ENCODE measurements at regions of chr13 and their contacts with region 1.

Region 1: GRCh38 chr13:94595950-94596574 is at the start of gene TGDS:
- DNase-seq: peak; percentile 93
- H3K4me3 Mint-ChIP-seq: peak within 1 kb of the TSS; percentile 95
- H3K27ac Mint-ChIP-seq: peak within 1 kb of the TSS; percentile 92
- H3K4me1 Mint-ChIP-seq: peaks cover 45% of the 10 kb centered on the region
- H3K27me3 Mint-ChIP-seq: no peaks in the 10 kb centered on the region

Region 2: GRCh38 chr13:94435604-94436226 is 160.3 kb before region 1 on chr13:
- CTCF ChIA-PET with region 1: interaction called, 12 read pairs
- DNase-seq: no peak
- H3K4me3 Mint-ChIP-seq: no peak overlapping the region
- H3K27ac Mint-ChIP-seq: no peak overlapping the region
- H3K4me1 Mint-ChIP-seq: peaks cover 10% of the 10 kb centered on the region
- H3K27me3 Mint-ChIP-seq: no peaks in the 10 kb centered on the region

Region 3: GRCh38 chr13:94656766-94657165 is 60.7 kb after region 1 on chr13:
- CTCF ChIA-PET with region 1: no interaction called
- DNase-seq: no peak
- H3K4me3 Mint-ChIP-seq: no peak overlapping the region
- H3K27ac Mint-ChIP-seq: no peak overlapping the region
- H3K4me1 Mint-ChIP-seq: peaks cover 2% of the 10 kb centered on the region
- H3K27me3 Mint-ChIP-seq: peaks cover 7% of the 10 kb centered on the region

Region 4: GRCh38 chr13:94761407-94761806 is 165.3 kb after region 1 on chr13:
- CTCF ChIA-PET with region 1: no interaction called
- DNase-seq: no peak
- H3K4me3 Mint-ChIP-seq: no peak overlapping the region
- H3K27ac Mint-ChIP-seq: no peak overlapping the region
- H3K4me1 Mint-ChIP-seq: no peaks in the 10 kb centered on the region
- H3K27me3 Mint-ChIP-seq: peaks cover 14% of the 10 kb centered on the region

Measured in activated naive CD4-positive, alpha-beta T cell treated with anti-CD3 and anti-CD28 coated beads, Interleukin-2, amount 10 ng/mL, durations not matched to agents 7 days and 5 days (primary cell).